Left lung (tissue), 14 donors: ENCODE measurements at regions of chr19 and their contacts with region 1.

Region 1: GRCh38 chr19:18846862-18847548 is 15.2 kb downstream of the UPF1 start:
- DNase-seq: peak; percentile 78 to 92 (median 85)
- ATAC-seq: peak; percentile 91
- H3K4me3 ChIP-seq: no peak overlapping the region
- H3K27ac ChIP-seq: peak overlapping the region; percentile 19 to 96
- H3K4me1 ChIP-seq: peaks cover 28 to 84% of the 10 kb centered on the region in 2 donors
- H3K27me3 ChIP-seq: no peaks in the 10 kb centered on the region
- CTCF ChIP-seq: peak; percentile 77

Region 2: GRCh38 chr19:18450931-18451845 is 395.8 kb before region 1 on chr19:
- intact Hi-C with region 1: loop called in 1 of 2 experiments (anchors 10 kb)
- DNase-seq: peak; percentile 76 to 96 (median 83)
- ATAC-seq: peak; percentile 91
- H3K4me3 ChIP-seq: no peak overlapping the region
- H3K27ac ChIP-seq: no peak overlapping the region
- H3K4me1 ChIP-seq: peaks cover 5 to 6% of the 10 kb centered on the region in 2 donors
- H3K27me3 ChIP-seq: no peaks in the 10 kb centered on the region
- CTCF ChIP-seq: peak; percentile 99

Region 3: GRCh38 chr19:18612772-18613588 is 234.0 kb before region 1 on chr19 and contains the start of gene TMEM59L:
- intact Hi-C with region 1: no loop called
- DNase-seq: peak in 1 of 4 donors; percentile 83
- ATAC-seq: peak; percentile 6
- H3K4me3 ChIP-seq: peak within 1 kb of the TSS; percentile 19 to 28
- H3K27ac ChIP-seq: no peak within 1 kb of the TSS
- H3K4me1 ChIP-seq: peaks cover 18 to 29% of the 10 kb centered on the region in 2 donors
- H3K27me3 ChIP-seq: peaks cover 64 to 92% of the 10 kb centered on the region in 2 donors
- CTCF ChIP-seq: no peak
- polyA plus RNA-seq, gene TMEM59L: 31.8 to 41.9 (median 34.8) TPM

Region 4: DNA sequence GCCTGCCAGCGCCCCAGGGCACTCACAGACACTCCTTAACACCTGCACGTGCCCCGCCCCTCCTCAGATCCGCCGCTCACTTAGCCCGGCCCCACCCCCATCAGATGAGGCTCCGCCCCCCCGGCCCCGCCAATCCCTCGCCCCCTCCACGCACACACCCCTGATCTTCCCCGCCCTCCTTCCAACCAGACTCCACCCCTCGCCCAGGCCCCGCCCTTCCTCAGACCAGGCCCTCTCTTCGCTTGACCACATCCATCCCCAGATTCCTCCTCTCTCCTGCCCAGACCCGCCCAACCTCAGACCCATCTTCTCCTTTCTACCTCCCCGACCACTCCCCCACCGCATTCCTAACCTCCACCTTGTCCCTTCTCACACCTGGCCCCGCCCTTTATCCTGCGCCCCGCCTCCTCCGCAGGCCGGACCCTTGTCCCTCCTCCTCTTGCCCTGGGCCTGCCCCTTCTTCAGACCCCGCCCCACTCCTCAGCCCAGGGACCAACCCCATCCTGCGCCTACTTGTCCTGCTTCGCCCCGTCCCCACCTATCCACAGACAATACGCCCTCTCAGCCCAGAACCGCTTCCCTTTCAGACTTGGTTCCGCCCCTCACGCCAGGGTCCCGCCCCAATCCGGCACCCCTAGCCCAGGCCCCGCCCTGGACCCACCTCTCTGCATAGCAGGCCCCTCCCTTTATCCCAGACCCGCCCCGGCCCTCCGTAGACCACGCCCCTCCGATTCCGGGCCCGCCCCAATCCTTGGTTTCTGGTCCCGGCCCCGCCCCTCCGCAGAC is 210.6 kb before region 1 on chr19:
- intact Hi-C with region 1: no loop called
- DNase-seq: peak; percentile 76 to 99 (median 96)
- ATAC-seq: peak; percentile 95
- H3K4me3 ChIP-seq: peak overlapping the region; percentile 64 to 80
- H3K27ac ChIP-seq: peak overlapping the region; percentile 33 to 72
- H3K4me1 ChIP-seq: peaks cover 3 to 18% of the 10 kb centered on the region in 2 donors
- H3K27me3 ChIP-seq: no peaks in the 10 kb centered on the region
- CTCF ChIP-seq: no peak